CD8-positive, alpha-beta T cell (primary cell): ENCODE measurements at regions of chr6 and their contacts with region 1.

Region 1: GRCh38 chr6:37432916-37433656 is at the start of gene CMTR1:
- DNase-seq: peak; percentile 93 to 98 (median 97)
- ATAC-seq: peak; percentile 85
- H3K4me3 ChIP-seq: peak within 1 kb of the TSS; percentile 71 to 79
- H3K4me3 Mint-ChIP-seq: peak within 1 kb of the TSS; percentile 94
- H3K27ac ChIP-seq: peak within 1 kb of the TSS; percentile 84 to 90
- H3K27ac Mint-ChIP-seq: peak within 1 kb of the TSS; percentile 97
- H3K4me1 ChIP-seq: peaks cover 9% of the 10 kb centered on the region
- H3K4me1 Mint-ChIP-seq: peaks cover 41% of the 10 kb centered on the region
- H3K27me3 ChIP-seq: no peaks in the 10 kb centered on the region
- H3K27me3 Mint-ChIP-seq: peaks cover 7% of the 10 kb centered on the region
- CTCF ChIP-seq: no peak
- total RNA-seq, gene CMTR1: 74.8 to 79.5 TPM

Region 2: GRCh38 chr6:36442671-36443470 is 990.2 kb before region 1 on chr6 and contains the starts of genes KCTD20 and PXT1:
- CTCF ChIA-PET with region 1: no interaction called
- POLR2A ChIA-PET with region 1: no interaction called
- intact Hi-C with region 1: loop called in 1 of 2 experiments (anchors 5 kb)
- DNase-seq: peak; percentile 66 to 92 (median 86)
- ATAC-seq: peak; percentile 71
- H3K4me3 ChIP-seq: peak within 1 kb of the TSS; percentile 64 to 97
- H3K4me3 Mint-ChIP-seq: peak within 1 kb of the TSS; percentile 97
- H3K27ac ChIP-seq: peak within 1 kb of the TSS; percentile 72 to 90
- H3K27ac Mint-ChIP-seq: peak within 1 kb of the TSS; percentile 99
- H3K4me1 ChIP-seq: peaks cover 31% of the 10 kb centered on the region
- H3K4me1 Mint-ChIP-seq: peaks cover 49% of the 10 kb centered on the region
- H3K27me3 ChIP-seq: no peaks in the 10 kb centered on the region
- H3K27me3 Mint-ChIP-seq: no peaks in the 10 kb centered on the region
- CTCF ChIP-seq: no peak
- total RNA-seq, gene KCTD20: 42.5 to 49.1 TPM
- total RNA-seq, gene PXT1: 0.56 to 0.95 TPM

Region 3: DNA sequence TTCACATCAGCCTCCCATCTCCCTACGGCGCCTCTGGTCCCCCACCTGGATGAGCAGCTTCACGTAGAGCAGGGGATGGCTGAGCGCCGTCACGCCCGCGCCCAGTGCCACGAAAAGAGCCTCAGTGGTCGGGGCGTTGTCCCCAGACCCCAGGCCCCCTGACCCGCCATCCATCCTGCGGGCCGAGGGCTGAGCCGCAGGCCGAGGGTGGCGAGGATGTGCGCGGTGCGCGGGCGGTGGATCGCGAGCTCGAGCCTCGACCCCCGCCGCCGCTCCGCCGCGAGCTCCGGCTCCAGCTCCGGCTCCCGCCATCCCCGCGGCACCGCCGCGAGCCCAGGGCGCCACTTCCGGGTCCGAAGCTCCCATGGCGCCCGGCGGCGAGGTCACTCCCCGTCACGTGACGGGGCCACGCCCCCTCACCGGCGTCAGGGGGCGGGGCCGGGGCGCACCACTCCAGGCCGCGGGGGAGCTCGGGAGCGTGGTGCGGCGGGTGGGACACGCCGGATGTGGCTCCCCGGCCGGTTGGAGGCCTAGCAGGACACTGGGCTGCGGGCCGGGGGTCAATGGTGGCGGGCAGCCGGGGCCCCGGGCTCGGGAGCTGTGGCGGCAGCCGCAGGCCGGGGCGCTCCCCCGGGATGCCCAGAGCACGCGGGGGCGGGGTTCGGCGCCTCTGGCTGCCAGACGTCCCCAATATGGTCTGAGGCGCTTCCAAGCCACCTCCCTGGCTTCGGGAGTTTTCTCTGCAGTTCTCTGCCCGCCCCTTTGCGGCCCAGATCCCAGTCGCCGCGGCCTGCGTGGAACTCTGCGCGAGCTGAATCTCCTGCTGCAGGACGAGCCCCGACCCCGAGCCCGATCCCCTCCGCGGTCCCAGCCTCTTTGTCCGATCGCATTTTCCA is 447.0 kb before region 1 on chr6 and contains the start of gene MTCH1:
- CTCF ChIA-PET with region 1: no interaction called
- POLR2A ChIA-PET with region 1: no interaction called
- intact Hi-C with region 1: loop called in 1 of 2 experiments (anchors 2 kb)
- DNase-seq: peak; percentile 74 to 95 (median 87)
- ATAC-seq: peak; percentile 82
- H3K4me3 ChIP-seq: peak within 1 kb of the TSS; percentile 97
- H3K4me3 Mint-ChIP-seq: no peak within 1 kb of the TSS
- H3K27ac ChIP-seq: peak within 1 kb of the TSS; percentile 83 to 85
- H3K27ac Mint-ChIP-seq: peak within 1 kb of the TSS; percentile 98
- H3K4me1 ChIP-seq: peaks cover 41% of the 10 kb centered on the region
- H3K4me1 Mint-ChIP-seq: peaks cover 20% of the 10 kb centered on the region
- H3K27me3 ChIP-seq: no peaks in the 10 kb centered on the region
- H3K27me3 Mint-ChIP-seq: no peaks in the 10 kb centered on the region
- CTCF ChIP-seq: no peak
- total RNA-seq, gene MTCH1: 267 to 269 TPM

Region 4: DNA sequence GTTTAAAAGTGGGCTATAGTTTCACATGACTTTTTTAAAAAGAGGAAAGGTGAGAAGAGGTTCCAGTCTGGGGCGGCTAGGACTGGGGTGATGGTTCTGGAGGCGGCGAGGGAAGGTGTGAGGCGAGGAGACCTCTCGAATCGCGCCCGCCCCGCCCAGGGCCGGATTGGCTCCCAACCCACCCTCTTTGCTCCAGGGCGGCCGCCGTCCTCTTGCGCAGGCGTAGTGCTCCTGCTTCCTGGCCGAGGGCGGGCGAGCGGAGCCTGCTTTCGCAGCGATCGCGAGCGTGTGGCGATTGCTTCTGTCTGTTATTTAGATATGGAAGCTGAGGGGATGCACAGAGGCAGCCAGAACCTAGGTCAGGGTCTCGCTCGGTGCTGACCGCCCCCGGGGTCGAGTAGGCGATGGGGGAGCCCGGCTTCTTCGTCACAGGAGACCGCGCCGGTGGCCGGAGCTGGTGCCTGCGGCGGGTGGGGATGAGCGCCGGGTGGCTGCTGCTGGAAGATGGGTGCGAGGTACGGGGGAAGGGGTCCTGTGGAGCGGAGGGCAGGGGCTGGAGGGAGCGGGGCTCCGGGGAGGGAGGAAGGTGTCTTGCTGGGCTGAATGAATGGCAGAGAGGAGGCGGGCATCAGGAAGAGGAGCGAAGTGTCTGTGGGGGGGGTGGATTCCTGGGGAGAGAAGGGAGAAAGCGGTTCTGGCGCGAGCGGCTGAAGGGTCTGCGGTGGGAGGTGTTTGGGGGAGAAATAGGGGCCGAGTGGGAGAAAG is 79.1 kb before region 1 on chr6 and contains the start of gene RNF8:
- CTCF ChIA-PET with region 1: no interaction called
- POLR2A ChIA-PET with region 1: interaction called, 4 read pairs
- intact Hi-C with region 1: loop called (anchors 1 to 2 kb)
- DNase-seq: peak; percentile 78 to 94 (median 89)
- ATAC-seq: peak; percentile 97
- H3K4me3 ChIP-seq: peak within 1 kb of the TSS; percentile 95 to 99
- H3K4me3 Mint-ChIP-seq: peak within 1 kb of the TSS; percentile 95
- H3K27ac ChIP-seq: peak within 1 kb of the TSS; percentile 65
- H3K27ac Mint-ChIP-seq: peak within 1 kb of the TSS; percentile 85
- H3K4me1 ChIP-seq: peaks cover 14% of the 10 kb centered on the region
- H3K4me1 Mint-ChIP-seq: peaks cover 36% of the 10 kb centered on the region
- H3K27me3 ChIP-seq: no peaks in the 10 kb centered on the region
- H3K27me3 Mint-ChIP-seq: no peaks in the 10 kb centered on the region
- CTCF ChIP-seq: no peak
- total RNA-seq, gene RNF8: 8.2 to 8.6 TPM

Region 5: GRCh38 chr6:37516076-37516919 is 83.2 kb after region 1 on chr6:
- CTCF ChIA-PET with region 1: no interaction called
- POLR2A ChIA-PET with region 1: interaction called, 13 read pairs
- intact Hi-C with region 1: loop called (anchors 1 to 2 kb)
- DNase-seq: peak; percentile 76 to 99 (median 90)
- ATAC-seq: peak; percentile 80
- H3K4me3 ChIP-seq: peak overlapping the region; percentile 35 to 52
- H3K4me3 Mint-ChIP-seq: peak overlapping the region; percentile 88
- H3K27ac ChIP-seq: peak overlapping the region; percentile 80 to 94
- H3K27ac Mint-ChIP-seq: peak overlapping the region; percentile 99
- H3K4me1 ChIP-seq: peaks cover 85% of the 10 kb centered on the region
- H3K4me1 Mint-ChIP-seq: peaks cover 80% of the 10 kb centered on the region
- H3K27me3 ChIP-seq: no peaks in the 10 kb centered on the region
- H3K27me3 Mint-ChIP-seq: no peaks in the 10 kb centered on the region
- CTCF ChIP-seq: no peak

Region 6: GRCh38 chr6:37791156-37791919 is 358.3 kb after region 1 on chr6:
- CTCF ChIA-PET with region 1: no interaction called
- POLR2A ChIA-PET with region 1: no interaction called
- intact Hi-C with region 1: no loop called
- DNase-seq: peak; percentile 44 to 84 (median 80)
- ATAC-seq: peak; percentile 99
- H3K4me3 ChIP-seq: no peak overlapping the region
- H3K4me3 Mint-ChIP-seq: no peak overlapping the region
- H3K27ac ChIP-seq: no peak overlapping the region
- H3K27ac Mint-ChIP-seq: no peak overlapping the region
- H3K4me1 ChIP-seq: peaks cover 7% of the 10 kb centered on the region
- H3K4me1 Mint-ChIP-seq: peaks cover 3% of the 10 kb centered on the region
- H3K27me3 ChIP-seq: no peaks in the 10 kb centered on the region
- H3K27me3 Mint-ChIP-seq: no peaks in the 10 kb centered on the region
- CTCF ChIP-seq: peak; percentile 66

Region 7: DNA sequence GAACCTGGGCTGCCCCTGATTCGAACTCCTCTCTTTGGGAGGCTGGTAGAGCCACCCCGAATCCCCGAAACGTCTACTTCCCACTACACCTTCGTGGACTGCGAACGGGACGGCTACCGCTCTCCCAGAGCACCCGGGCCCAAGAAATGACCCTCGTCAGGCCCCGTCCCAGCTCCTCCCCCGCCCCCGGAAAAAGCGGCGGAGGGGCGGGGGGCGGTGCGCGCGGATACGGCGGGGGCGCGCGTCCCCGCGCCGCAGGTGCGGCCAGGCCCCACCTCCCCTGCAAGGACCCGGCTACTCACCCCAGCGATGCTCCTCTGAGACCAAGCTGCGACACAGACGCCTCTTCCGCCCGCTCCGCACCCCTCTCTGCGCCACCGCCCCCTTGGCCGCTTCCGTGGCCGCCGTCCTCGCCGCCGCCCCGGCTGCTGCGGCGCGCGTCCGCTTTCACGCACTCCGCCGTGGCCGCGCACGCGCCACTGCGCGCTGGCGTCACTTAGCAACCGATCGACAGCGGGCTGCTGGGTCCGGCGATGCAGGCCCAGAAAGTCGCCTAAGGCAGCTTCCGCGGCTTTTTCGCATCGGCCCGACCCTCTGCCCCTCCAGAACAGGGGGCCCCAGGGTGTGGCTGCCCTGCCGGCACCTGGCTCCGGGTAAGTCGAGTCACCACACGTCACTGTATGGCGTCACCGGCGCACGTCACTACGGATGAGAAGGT is 1206.6 kb after region 1 on chr6 and contains the start of gene BTBD9:
- CTCF ChIA-PET with region 1: no interaction called
- POLR2A ChIA-PET with region 1: no interaction called
- intact Hi-C with region 1: loop called in 1 of 2 experiments (anchors 2 kb)
- DNase-seq: peak; percentile 71 to 94 (median 80)
- ATAC-seq: peak; percentile 79
- H3K4me3 ChIP-seq: peak within 1 kb of the TSS; percentile 81 to 87
- H3K4me3 Mint-ChIP-seq: peak within 1 kb of the TSS; percentile 91
- H3K27ac ChIP-seq: peak within 1 kb of the TSS; percentile 92 to 99
- H3K27ac Mint-ChIP-seq: peak within 1 kb of the TSS; percentile 85
- H3K4me1 ChIP-seq: peaks cover 32% of the 10 kb centered on the region
- H3K4me1 Mint-ChIP-seq: peaks cover 52% of the 10 kb centered on the region
- H3K27me3 ChIP-seq: no peaks in the 10 kb centered on the region
- H3K27me3 Mint-ChIP-seq: no peaks in the 10 kb centered on the region
- CTCF ChIP-seq: no peak
- total RNA-seq, gene BTBD9: 54.2 to 54.5 TPM

Region 8: DNA sequence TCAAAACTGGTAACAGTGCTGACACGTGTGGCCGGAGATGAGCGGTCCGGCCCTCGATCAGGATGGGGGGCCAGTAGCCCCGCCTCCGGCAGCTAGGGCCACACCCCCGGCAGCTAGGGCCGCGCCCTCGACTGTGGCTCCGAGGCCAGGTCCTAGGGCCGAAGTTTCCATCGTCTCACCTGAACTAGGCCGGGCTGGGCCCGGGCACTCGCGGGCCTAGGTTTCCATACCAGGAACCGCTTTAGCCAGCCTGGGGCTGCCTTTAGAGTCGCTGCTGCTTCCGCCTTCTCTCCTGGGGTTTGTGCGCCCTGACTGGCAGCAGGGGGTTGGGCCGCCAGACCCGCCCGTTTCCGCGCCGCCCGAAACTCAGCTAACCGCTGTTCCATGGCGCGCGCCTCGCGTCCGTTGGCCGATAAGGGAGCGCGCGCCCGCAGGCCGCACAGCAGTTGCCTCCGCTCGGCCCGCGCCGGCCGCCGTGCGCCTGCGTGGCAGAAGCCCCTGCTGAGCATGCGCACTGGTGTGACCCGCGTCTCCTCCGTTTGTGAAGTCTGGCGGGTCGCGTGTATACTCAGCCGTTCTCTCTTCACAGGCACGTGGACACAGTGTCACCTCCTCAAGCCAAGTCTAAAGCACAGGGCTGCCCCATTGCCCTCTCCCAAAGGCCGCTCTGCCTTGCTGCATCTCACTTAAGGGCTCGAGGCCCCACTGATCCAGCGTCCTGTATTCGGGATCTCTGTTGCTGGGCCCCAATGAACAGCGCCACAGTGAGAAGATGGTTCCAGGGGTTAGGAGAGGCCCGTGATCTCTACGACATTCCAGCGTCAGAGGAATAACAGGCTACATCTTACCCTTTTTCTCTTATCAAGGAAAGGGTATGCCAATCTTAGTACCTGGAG is 1681.9 kb after region 1 on chr6 and contains the start of gene SAYSD1:
- CTCF ChIA-PET with region 1: no interaction called
- POLR2A ChIA-PET with region 1: no interaction called
- intact Hi-C with region 1: loop called in 1 of 2 experiments (anchors 10 kb)
- DNase-seq: peak; percentile 80 to 98 (median 91)
- ATAC-seq: peak; percentile 79
- H3K4me3 ChIP-seq: peak within 1 kb of the TSS; percentile 64 to 71
- H3K4me3 Mint-ChIP-seq: peak within 1 kb of the TSS; percentile 96
- H3K27ac ChIP-seq: peak within 1 kb of the TSS; percentile 80 to 88
- H3K27ac Mint-ChIP-seq: peak within 1 kb of the TSS; percentile 98
- H3K4me1 ChIP-seq: peaks cover 45% of the 10 kb centered on the region
- H3K4me1 Mint-ChIP-seq: peaks cover 57% of the 10 kb centered on the region
- H3K27me3 ChIP-seq: no peaks in the 10 kb centered on the region
- H3K27me3 Mint-ChIP-seq: no peaks in the 10 kb centered on the region
- CTCF ChIP-seq: no peak
- total RNA-seq, gene SAYSD1: 21.8 to 24.3 TPM